ENCODE measurements at regions of chr5 and their contacts with region 1.

Region 1: GRCh38 chr5:142830241-142830989 is 60.2 kb downstream of the ARHGAP26 start:
- DNase-seq: no peak
- ATAC-seq: no peak
- H3K4me3 ChIP-seq: no peak overlapping the region
- H3K27ac ChIP-seq: no peak overlapping the region
- H3K4me1 ChIP-seq: peaks cover 97% of the 10 kb centered on the region
- H3K27me3 ChIP-seq: no peaks in the 10 kb centered on the region
- CTCF ChIP-seq: no peak
- EP300 ChIP-seq: no peak
- POLR2A ChIP-seq: no peak
- RAD21 ChIP-seq: no peak

Region 2: DNA sequence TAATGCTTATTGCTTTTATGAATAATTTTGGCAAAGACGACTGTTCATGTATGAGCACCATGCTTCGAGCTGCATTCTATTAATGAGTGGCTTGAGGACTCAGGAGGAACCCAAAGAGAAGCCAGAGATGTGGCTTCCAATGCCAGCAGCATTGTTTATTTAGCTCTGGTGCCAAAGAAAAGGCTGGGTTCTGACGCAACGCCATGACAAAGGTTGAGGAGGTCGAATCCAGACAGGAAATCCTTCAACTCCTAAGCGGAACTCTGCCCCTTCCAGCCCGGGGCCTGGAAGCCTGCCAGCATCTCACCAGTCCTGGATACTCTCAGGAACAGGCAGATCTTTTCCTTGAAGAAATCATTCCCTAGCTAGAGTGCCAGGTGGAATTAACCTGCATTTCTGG is 44.1 kb after region 1 on chr5:
- CTCF ChIA-PET with region 1: no interaction called
- POLR2A ChIA-PET with region 1: interaction called, 3 read pairs
- in situ Hi-C with region 1: no loop called
- intact Hi-C with region 1: loop called (anchors 5 kb)
- DNase-seq: peak; percentile 67
- ATAC-seq: peak; percentile 57
- H3K4me3 ChIP-seq: no peak overlapping the region
- H3K27ac ChIP-seq: no peak overlapping the region
- H3K4me1 ChIP-seq: peaks cover 49% of the 10 kb centered on the region
- H3K27me3 ChIP-seq: no peaks in the 10 kb centered on the region
- CTCF ChIP-seq: no peak
- EP300 ChIP-seq: peak in 1 of 2 experiments; percentile 40; a peak in 1 of 4 replicates
- POLR2A ChIP-seq: no peak
- RAD21 ChIP-seq: no peak

Measured in HepG2 (cell line).